PC-9 (cell line): ENCODE measurements at regions of chrX and their contacts with region 1.

Region 1: DNA sequence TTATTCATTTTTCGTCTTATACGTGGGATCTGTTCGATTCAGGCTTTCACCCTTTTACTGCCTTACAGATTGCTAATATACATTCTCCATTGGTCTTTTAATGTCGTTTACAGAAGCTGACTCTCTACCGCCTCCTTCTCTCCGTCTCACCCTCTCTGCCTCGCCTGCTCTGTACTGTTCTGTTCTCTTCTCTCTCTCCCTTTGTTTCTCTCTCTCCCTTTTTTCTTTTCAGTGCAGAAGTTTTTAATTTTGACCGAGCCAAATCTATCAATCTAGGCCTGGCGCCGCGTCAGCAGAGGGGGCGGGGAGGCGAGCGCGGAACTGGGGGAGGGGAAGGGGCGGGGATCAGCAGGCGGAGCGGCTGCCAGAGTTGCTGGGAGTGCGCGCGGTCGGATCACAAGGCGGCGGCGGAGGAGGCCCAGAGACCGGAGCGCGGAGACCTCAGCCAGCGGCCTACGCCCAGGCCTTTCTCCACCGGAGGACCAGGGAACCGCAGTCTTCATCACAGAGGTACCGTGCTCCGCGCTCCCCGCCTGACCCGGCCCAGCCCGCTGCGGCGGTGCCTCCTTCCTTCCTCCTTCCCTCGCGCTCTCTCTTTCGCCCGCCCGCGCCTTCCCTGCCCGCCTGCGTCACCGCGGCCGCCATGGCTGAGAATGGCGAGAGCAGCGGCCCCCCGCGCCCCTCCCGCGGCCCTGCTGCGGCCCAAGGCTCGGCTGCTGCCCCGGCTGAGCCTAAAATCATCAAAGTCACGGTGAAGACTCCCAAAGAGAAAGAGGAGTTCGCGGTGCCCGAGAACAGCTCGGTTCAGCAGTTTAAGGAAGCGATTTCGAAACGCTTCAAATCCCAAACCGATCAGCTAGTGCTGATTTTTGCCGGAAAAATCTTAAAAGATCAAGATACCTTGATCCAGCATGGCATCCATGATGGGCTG is at the start of gene UBQLN2:
- DNase-seq: peak; percentile 49 to 87
- H3K4me3 ChIP-seq: peak within 1 kb of the TSS; percentile 95
- H3K27ac ChIP-seq: peak within 1 kb of the TSS; percentile 93
- H3K4me1 ChIP-seq: peaks cover 9% of the 10 kb centered on the region; the same call in 1 of the 2 replicates
- H3K27me3 ChIP-seq: no peaks in the 10 kb centered on the region
- CTCF ChIP-seq: peak; percentile 29; the same call in 1 of the 2 replicates
- total RNA-seq, gene UBQLN2: 53.5 and 78.7 TPM in 2 replicates

Region 2: GRCh38 chrX:56281789-56282188 is 281.7 kb before region 1 on chrX:
- CTCF ChIA-PET with region 1: no interaction called
- POLR2A ChIA-PET with region 1: no interaction called
- intact Hi-C with region 1: loop called (anchors 5 kb)
- DNase-seq: peak; percentile 4 to 38
- H3K4me3 ChIP-seq: no peak overlapping the region
- H3K27ac ChIP-seq: no peak overlapping the region
- H3K4me1 ChIP-seq: no peaks in the 10 kb centered on the region
- H3K27me3 ChIP-seq: no peaks in the 10 kb centered on the region
- CTCF ChIP-seq: peak; percentile 62

Region 3: GRCh38 chrX:56314334-56314733 is 249.2 kb before region 1 on chrX:
- CTCF ChIA-PET with region 1: no interaction called
- POLR2A ChIA-PET with region 1: no interaction called
- intact Hi-C with region 1: loop called (anchors 1 kb)
- DNase-seq: peak in 1 of 2 experiments; percentile 43
- H3K4me3 ChIP-seq: no peak overlapping the region
- H3K27ac ChIP-seq: no peak overlapping the region
- H3K4me1 ChIP-seq: no peaks in the 10 kb centered on the region
- H3K27me3 ChIP-seq: no peaks in the 10 kb centered on the region
- CTCF ChIP-seq: no peak

Region 4: DNA sequence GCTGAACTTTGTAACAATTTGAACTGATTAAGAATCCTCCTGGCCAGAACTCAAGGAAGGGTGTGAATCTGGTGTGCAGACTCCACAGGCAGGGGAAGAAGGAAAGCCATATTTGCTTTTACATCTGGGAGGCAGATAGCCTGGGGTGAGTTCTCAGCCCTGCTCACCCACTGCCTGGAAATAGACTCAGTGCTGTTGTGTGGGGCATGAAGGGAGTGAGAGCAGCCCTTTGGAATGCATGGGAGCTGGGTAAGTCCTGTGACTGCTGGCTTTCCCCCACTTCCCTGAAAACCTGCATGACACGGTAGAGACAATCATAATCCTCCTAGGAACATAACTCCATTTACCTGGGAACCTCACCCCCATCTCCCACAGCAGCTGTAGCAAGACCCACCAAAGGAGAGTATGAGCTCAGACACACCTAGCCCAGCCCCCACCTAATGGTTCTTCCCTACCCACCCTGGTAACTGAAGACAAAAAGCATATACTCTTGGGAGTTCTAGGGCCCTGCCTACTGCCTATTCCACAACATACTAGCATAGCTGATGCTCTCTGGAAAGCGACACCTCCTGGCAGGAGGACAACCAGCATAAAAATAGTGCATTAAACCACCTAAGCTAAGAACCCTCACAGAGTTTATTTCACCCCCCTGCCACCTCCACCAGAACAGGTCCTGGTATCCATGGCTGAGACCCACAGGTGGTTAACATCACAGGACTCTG is 59.4 kb before region 1 on chrX:
- CTCF ChIA-PET with region 1: interaction called, 7 read pairs
- POLR2A ChIA-PET with region 1: interaction called, 4 read pairs
- intact Hi-C with region 1: loop called (anchors 1 kb)
- DNase-seq: peak; percentile 89 to 91
- H3K4me3 ChIP-seq: peak overlapping the region; percentile 46
- H3K27ac ChIP-seq: peak overlapping the region; percentile 100
- H3K4me1 ChIP-seq: peaks cover 57% of the 10 kb centered on the region
- H3K27me3 ChIP-seq: no peaks in the 10 kb centered on the region
- CTCF ChIP-seq: no peak; the same call in 1 of the 2 replicates